Psoas muscle (tissue), 8 donors: ENCODE measurements at regions of chr2 and their contacts with region 1.

Region 1: DNA sequence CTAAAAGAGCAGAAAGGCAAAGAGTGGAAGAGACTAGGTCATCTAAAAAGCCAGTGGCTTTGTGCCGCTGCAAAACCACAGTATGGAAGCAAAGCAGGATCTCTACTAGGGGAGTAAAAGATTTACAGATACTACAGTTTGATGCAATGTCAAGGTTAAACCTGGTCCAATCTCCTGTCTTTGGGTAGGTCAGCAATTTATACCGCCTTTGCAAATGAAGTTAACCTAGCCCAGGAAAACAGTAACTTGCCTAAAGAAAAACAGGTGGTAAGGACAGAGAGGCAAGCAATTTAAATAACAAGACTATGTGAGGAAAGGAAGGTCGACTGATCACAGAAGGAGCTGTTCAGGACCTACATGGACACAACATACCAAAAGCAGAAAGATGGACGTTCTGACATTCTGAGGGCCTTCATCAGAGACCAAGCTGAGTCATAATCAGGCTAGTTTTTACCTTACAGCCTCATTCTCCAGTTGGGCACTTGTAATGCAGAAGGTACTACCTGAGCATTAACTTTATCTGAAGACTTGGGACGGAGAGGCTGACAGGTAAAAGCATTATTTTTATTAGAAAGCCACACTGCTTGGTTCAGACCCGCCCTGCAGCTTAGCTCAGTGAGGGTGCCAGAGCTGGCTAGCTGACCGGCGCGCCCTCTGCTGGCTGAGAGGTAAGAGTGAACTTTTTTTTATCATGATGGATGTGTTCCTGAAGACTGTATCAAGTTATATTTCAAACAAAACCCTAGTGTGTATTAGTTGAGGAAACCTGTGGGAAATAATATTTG is 15.9 kb downstream of the CDKL4 start:
- DNase-seq: peak; percentile 75 to 87
- ATAC-seq: peak; percentile 85 to 91 (median 88)
- H3K4me3 ChIP-seq: peak overlapping the region; percentile 2
- H3K27ac ChIP-seq: no peak overlapping the region
- H3K4me1 ChIP-seq: no peaks in the 10 kb centered on the region
- H3K27me3 ChIP-seq: no peaks in the 10 kb centered on the region
- CTCF ChIP-seq: peak; percentile 87

Region 2: GRCh38 chr2:39059366-39059952 is 168.4 kb before region 1 on chr2:
- intact Hi-C with region 1: loop called (anchors 2 kb)
- DNase-seq: no peak
- ATAC-seq: peak in 2 of 4 donors; percentile 54 to 80
- H3K4me3 ChIP-seq: no peak overlapping the region
- H3K27ac ChIP-seq: no peak overlapping the region
- H3K4me1 ChIP-seq: peaks cover 3% of the 10 kb centered on the region
- H3K27me3 ChIP-seq: no peaks in the 10 kb centered on the region
- CTCF ChIP-seq: peak; percentile 79

Region 3: DNA sequence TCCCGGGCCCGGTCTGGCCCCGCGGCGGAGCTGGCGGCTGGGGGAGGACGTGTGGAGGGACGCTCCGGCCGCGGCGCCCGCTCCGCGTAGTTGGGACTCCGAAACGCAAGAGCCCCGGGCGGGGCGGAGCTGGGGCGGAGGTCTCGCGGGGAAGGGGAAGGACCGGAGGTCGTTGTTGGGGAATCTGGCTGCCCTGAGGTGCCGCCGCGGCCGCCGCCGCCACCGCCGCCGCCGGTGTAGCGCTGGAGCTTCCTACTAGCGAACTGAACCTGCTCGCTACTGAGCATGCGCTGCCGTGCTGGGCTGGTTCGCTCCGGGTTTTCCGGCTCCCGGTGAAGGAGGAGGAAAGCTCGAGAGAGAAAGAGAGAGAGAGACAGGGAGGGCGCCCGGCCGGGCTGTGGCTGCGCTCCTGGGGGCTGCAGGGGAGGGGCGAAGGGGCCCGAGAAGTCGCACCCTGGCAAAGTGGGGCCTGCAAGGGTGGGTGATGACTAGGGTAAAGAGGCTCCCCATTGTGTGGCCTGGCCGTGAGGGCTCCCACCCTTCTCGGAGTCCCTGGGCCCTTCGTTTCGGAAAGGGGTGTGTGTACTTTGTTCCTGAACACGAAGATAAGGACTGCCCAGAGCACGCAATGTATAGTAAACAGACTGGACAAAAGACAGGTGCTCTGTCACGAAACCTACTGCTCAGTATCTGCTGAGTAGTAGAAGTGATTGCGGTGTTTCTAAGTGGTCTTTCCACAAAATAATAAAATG is 106.9 kb before region 1 on chr2 and contains the start of gene SOS1:
- intact Hi-C with region 1: loop called (anchors 1 to 2 kb)
- DNase-seq: peak; percentile 96 to 98
- ATAC-seq: peak; percentile 79 to 83 (median 82)
- H3K4me3 ChIP-seq: peak within 1 kb of the TSS; percentile 92
- H3K27ac ChIP-seq: peak within 1 kb of the TSS; percentile 94
- H3K4me1 ChIP-seq: peaks cover 50% of the 10 kb centered on the region
- H3K27me3 ChIP-seq: no peaks in the 10 kb centered on the region
- CTCF ChIP-seq: no peak
- total RNA-seq, gene SOS1: 25.4 to 35.7 (median 33.1) TPM

Region 4: GRCh38 chr2:39283561-39283960 is 55.7 kb after region 1 on chr2:
- intact Hi-C with region 1: no loop called
- DNase-seq: no peak
- ATAC-seq: no peak
- H3K4me3 ChIP-seq: no peak overlapping the region
- H3K27ac ChIP-seq: no peak overlapping the region
- H3K4me1 ChIP-seq: no peaks in the 10 kb centered on the region
- H3K27me3 ChIP-seq: no peaks in the 10 kb centered on the region
- CTCF ChIP-seq: no peak